Gastrocnemius medialis (tissue), 4 donors: ENCODE measurements at regions of chr10 and their contacts with region 1.

Region 1: DNA sequence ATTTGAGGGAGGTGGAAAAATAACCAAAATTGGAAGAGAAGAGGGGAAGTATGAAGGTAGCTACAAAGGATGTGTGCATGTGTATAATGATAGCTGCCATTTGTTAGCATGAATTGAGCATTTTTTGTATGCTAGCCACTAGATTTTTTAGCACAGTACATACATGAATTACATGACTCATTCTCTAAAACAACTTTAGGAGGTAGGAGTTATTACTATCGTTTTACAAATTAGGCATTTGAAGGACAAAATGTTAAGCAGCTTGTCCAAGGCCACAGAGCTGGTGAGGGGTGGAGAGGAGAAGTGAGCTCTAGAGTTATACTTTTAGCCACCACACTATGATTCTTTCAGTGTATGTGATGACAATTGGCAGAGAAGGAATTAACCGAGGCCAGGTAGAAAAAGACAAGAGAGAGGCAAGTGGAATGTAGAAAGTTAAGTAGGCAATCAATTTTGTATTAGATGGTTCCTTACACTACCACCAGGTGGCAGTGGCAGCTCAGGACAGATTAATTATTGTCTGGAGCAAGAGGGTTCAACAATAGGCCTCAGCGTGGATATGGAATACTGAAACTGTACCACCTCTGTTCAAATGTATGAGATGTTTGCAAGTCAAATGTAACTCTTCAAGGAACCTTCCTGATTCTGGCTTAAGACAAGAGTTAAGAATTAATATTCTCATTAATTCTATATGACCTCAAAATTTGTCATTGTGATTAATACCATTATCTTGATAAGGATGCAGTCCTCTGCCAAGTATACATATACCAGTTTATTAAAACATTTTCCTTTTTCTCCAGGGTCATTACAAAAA is 128.0 kb downstream of the MBL2 start:
- DNase-seq: peak in 1 of 2 donors; percentile 13
- ATAC-seq: peak in 1 of 2 donors; percentile 85
- H3K4me3 ChIP-seq: no peak overlapping the region
- H3K27ac ChIP-seq: no peak overlapping the region
- H3K4me1 ChIP-seq: peaks cover 0 to 7% of the 10 kb centered on the region in 2 donors
- H3K27me3 ChIP-seq: no peaks in the 10 kb centered on the region
- CTCF ChIP-seq: peak; percentile 39 to 72 (median 62)
- POLR2A ChIP-seq: no peak

Region 2: DNA sequence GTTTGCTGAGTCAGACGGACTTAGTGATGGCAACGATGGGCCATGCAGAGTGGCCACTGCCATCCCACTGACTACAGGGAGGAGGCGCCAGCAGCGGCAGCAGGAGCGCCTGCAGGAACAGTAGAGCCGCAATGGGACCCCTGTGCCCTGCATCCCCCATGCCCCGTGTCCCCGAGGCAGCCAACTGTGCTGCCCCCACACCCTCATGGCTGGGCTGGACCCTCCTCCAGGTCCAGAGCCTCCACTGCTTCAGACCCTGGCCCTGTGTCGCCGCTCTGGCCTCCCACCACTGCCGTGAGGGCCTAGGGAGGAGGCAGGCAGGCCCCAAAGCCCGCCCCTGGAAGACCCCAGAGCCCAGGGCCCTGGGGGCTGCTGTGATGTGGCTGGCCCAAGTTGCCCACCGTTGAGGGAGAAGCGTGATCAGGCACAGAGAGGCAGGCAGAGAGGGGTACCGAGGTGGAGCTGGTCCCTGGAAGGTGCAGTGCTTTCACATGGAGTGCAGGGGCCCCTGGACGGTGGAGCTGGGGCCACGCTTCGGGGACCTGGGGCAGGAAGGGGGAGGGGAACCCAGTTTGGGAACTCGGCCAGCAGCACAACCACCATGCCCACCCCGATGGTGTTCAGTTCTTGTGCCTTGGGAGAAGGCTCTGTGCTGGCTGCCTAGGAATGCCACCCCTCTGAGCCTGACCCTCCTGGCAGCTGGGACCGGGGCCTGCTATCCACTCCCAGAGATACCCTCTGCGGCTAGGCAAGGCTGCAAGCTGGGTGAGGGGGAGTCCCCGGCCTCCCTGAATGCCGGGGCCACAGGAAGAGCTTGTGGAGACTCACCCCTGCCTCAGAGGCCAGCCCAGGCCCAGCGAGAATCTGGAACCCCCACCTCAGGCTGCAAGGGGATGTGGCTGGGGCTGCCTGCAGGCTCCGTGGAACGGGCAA is 297.9 kb before region 1 on chr10:
- in situ Hi-C with region 1: no loop called
- intact Hi-C with region 1: no loop called
- DNase-seq: no peak
- ATAC-seq: no peak
- H3K4me3 ChIP-seq: no peak overlapping the region
- H3K27ac ChIP-seq: no peak overlapping the region
- H3K4me1 ChIP-seq: no peaks in the 10 kb centered on the region
- H3K27me3 ChIP-seq: no peaks in the 10 kb centered on the region
- CTCF ChIP-seq: no peak
- POLR2A ChIP-seq: no peak

Region 3: GRCh38 chr10:52729271-52730104 is 84.9 kb after region 1 on chr10:
- in situ Hi-C with region 1: no loop called
- intact Hi-C with region 1: loop called (anchors 1 kb)
- DNase-seq: no peak
- ATAC-seq: no peak
- H3K4me3 ChIP-seq: peak overlapping the region in 2 of 4 donors; percentile 31 to 40
- H3K27ac ChIP-seq: no peak overlapping the region
- H3K4me1 ChIP-seq: no peaks in the 10 kb centered on the region
- H3K27me3 ChIP-seq: no peaks in the 10 kb centered on the region
- CTCF ChIP-seq: peak in 4 of 5 experiments; percentile 21 to 44 (median 33)
- POLR2A ChIP-seq: no peak